ENCODE measurements at regions of chr1 and their contacts with region 1.

Region 1: GRCh38 chr1:65254319-65255034 is 54.9 kb upstream of the DNAJC6 start:
- DNase-seq: peak; percentile 83
- H3K4me3 Mint-ChIP-seq: peak overlapping the region; percentile 93
- H3K27ac Mint-ChIP-seq: peak overlapping the region; percentile 40
- H3K4me1 Mint-ChIP-seq: peaks cover 34% of the 10 kb centered on the region
- H3K27me3 Mint-ChIP-seq: peaks cover 23% of the 10 kb centered on the region

Region 2: DNA sequence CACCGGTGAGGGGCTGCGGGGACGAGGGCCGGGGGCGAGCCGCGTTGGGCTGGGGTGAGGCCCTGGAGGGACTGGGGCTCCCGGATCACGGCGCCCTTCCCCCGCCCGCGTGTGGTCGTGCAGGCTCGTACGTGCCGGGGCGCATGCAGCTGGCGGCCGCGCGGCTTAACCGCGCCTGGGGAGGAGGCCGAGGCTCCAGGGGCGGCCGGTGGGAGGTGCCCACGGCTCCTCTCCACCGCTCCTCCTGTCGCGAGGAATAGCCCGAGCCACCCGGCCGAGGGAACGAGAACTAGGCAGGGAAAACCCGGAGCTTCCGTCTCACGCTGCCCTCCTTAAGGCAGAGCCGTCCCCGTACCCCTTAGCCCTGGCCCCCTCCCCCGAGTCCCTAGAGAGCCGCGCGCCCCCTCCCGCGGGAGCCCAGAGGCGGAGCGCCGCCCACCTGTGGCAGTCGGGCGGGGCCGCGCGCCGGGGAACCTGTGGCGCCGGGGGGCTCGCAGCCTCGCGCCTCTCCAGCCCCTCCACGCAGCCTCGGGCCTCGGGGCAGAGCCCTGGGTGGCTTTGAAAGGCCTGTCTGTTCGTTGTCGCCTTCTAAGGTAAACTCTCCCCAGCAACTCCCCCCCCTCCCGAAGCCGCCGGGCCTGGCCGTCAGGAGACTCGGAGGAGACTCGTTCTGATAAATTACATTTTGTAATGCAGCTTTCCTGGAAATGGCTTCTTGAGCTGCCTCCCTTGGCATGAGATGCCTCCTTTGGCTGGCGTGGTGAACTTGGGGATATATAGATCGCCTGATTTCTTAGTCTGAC is 105.7 kb before region 1 on chr1:
- intact Hi-C with region 1: loop called (anchors 1 kb)
- DNase-seq: peak; percentile 55
- H3K4me3 Mint-ChIP-seq: peak overlapping the region; percentile 94
- H3K27ac Mint-ChIP-seq: peak overlapping the region; percentile 90
- H3K4me1 Mint-ChIP-seq: peaks cover 52% of the 10 kb centered on the region
- H3K27me3 Mint-ChIP-seq: peaks cover 7% of the 10 kb centered on the region

Region 3: DNA sequence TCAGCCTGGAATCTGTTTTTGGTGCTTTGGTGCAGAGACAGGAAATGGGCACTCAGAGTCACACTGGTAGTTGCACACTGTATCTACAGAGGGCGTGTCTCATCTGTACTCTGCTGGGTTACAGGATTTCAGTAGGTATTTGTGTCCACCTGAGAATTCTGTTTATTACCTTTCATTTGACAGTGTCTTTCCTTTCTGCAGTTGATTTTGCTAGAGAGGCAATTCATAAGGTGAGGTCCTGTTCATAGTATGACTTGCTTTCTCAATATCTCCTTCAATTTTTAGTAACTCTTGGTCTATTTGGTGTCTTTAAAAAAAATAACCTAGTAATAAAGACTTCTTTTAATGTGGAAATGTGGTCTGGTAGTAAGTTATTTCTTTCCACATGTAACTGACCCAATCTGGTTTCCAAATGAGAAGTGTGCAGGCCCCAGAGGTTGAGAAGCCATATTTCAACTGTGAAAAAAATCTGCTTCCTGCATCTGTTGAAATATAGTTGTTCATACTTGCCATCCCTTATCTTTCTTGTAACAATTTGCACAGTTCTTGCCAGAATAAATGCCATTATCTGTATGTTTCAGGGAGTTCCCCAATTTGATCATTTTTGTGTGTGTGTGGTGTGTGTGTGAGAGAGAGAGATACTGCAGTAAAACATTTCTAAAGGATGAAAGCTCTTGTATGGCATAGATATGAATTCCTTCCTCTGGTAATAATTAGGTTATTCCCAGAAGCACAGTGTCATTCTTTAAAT is 23.6 kb before region 1 on chr1:
- intact Hi-C with region 1: loop called (anchors 1 kb)
- DNase-seq: no peak
- H3K4me3 Mint-ChIP-seq: no peak overlapping the region
- H3K27ac Mint-ChIP-seq: peak overlapping the region; percentile 81
- H3K4me1 Mint-ChIP-seq: peaks cover 32% of the 10 kb centered on the region
- H3K27me3 Mint-ChIP-seq: no peaks in the 10 kb centered on the region

Region 4: GRCh38 chr1:65235867-65236805 is 18.3 kb before region 1 on chr1:
- intact Hi-C with region 1: loop called (anchors 1 kb)
- DNase-seq: no peak
- H3K4me3 Mint-ChIP-seq: no peak overlapping the region
- H3K27ac Mint-ChIP-seq: no peak overlapping the region
- H3K4me1 Mint-ChIP-seq: peaks cover 15% of the 10 kb centered on the region
- H3K27me3 Mint-ChIP-seq: peaks cover 2% of the 10 kb centered on the region

Region 5: GRCh38 chr1:65265651-65266351 is 11.3 kb after region 1 on chr1:
- intact Hi-C with region 1: loop called (anchors 1 kb)
- DNase-seq: peak; percentile 16
- H3K4me3 Mint-ChIP-seq: peak overlapping the region; percentile 71
- H3K27ac Mint-ChIP-seq: no peak overlapping the region
- H3K4me1 Mint-ChIP-seq: peaks cover 36% of the 10 kb centered on the region
- H3K27me3 Mint-ChIP-seq: peaks cover 15% of the 10 kb centered on the region

Measured in activated T-helper 1 cell treated with anti-CD3 and anti-CD28 coated beads, Interleukin-12 subunit alpha, Interleukin-12 subunit beta, Interleukin-2, Interleukin-4 antibody, amounts not matched to agents 30 ng/mL and 10 ng/mL and 1 ng/mL, durations not matched to agents 14 hours and 24 hours and 36 hours (primary cell).